ENCODE measurements at regions of chr13 and their contacts with region 1.

Region 1: GRCh38 chr13:112873851-112874750 is 94.9 kb upstream of the MCF2L start:
- DNase-seq: peak; percentile 60 to 85 (median 79)
- H3K4me3 ChIP-seq: no peak overlapping the region
- H3K27ac ChIP-seq: peak overlapping the region in 22 of 59 donors; percentile 2 to 70 (median 34)
- H3K27me3 ChIP-seq: no peaks in the 10 kb centered on the region
- CTCF ChIP-seq: peak; percentile 85 to 98 (median 94)

Region 2: DNA sequence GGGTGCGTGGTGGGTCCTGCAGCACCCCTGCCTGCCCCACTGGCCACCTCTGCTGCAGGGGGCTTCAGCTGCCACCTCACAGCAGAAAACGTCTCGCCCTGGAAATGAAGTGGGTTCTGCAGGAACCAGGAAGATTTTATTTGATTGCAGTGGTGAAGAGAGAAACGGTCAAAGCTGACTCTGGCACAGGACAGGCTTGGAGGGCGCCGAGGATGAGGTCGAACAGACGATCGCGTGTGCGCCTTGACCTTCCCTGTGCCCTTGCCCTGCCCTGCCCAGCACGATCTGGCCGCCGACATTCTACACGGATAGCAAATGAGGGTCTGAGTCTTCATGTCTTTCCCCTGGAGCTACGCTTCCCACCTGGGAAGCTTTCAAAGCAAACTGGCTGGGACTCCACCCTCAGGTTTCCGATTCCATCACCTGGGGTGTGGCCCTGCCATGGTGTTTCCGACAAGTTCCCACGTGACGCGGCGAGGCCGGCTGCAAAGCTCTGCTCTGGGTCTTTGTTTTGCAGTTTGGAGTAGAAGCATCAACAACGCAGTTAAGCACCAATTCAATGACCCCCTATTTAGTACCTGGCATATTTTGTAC is 235.8 kb before region 1 on chr13:
- intact Hi-C with region 1: loop called (anchors 1 to 5 kb)
- DNase-seq: peak in 1 of 10 donors; percentile 15
- H3K4me3 ChIP-seq: no peak overlapping the region
- H3K27ac ChIP-seq: no peak overlapping the region
- H3K27me3 ChIP-seq: peaks cover 0 to 55% (median 28%) of the 10 kb centered on the region in 45 donors
- CTCF ChIP-seq: no peak

Region 3: DNA sequence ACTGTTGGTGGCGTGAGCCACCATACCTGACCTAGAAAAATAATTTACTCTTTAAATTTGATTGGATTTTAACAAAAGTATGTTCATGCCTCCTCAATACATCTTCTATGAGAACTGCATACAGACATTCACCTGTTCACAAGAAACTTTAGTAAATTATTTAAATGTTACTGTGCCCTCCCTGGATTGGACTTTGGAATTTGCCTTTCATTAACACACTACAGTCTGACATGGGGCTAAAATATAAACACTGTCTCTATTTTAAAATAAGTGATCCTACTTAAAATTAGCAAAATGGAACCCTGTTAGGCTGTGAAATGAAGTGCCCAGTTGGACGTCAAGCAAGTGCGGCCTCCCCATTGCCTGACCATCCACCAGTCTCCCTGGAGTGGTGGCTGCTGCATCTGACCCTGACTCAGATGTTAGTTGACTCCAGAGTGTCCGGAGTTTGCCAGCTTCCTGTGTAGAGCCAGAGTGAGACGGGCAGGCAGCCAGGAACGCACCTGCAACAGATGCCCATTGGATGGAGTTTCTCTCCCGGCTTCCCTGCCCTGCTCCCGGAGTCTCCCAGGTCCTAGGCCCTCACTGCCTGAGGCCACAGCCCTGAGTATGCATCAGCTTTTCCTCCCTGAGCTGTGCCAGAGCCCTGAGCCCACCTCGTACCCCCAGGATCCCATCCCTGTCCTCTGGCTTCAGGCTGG is 230.2 kb before region 1 on chr13:
- intact Hi-C with region 1: loop called (anchors 1 to 5 kb)
- DNase-seq: peak in 2 of 10 donors; percentile 11 to 42
- H3K4me3 ChIP-seq: no peak overlapping the region
- H3K27ac ChIP-seq: no peak overlapping the region
- H3K27me3 ChIP-seq: peaks cover 0 to 18% (median 8%) of the 10 kb centered on the region in 45 donors
- CTCF ChIP-seq: no peak